A549 (cell line): ENCODE measurements at regions of chr1 and their contacts with region 1.

Region 1: GRCh38 chr1:184664042-184664655 is 90.5 kb downstream of the EDEM3 start:
- DNase-seq: peak; percentile 51 to 56
- ATAC-seq: peak; percentile 90 to 98
- H3K4me3 ChIP-seq: 0 out of 3 replicates have a peak overlapping the region, but pooled peaks have one; percentile 25
- H3K27ac ChIP-seq: peak overlapping the region; percentile 60 to 75
- H3K4me1 ChIP-seq: no peaks in the 10 kb centered on the region
- CTCF ChIP-seq: peak; percentile 86
- EP300 ChIP-seq: no peak
- POLR2A ChIP-seq: no peak
- RAD21 ChIP-seq: peak; percentile 83 to 91

Region 2: DNA sequence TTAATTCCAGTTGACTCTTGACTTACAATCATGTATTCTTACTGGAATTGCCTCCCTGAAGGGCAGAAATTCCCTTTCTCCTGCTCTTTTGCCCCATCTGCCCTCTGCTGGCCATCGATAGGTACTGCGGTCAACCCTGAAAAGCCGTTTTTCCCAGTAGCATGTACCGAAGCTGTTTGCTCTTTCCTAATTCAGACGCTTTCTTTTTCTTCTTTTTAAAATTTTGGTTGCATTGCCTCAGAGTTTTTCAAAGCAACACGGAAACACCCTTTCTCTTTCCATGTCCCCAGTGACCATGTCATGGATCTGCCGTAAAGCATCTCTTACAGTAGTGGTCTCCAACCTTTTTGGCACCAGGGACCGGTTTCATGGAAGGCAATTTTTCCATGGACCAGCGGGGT is 441.5 kb before region 1 on chr1:
- CTCF ChIA-PET with region 1: interaction called, 17 read pairs
- POLR2A ChIA-PET with region 1: no interaction called
- DNase-seq: peak; percentile 35 to 49
- ATAC-seq: peak; percentile 61 to 76; a peak in 4 of 6 replicates
- H3K4me3 ChIP-seq: peak overlapping the region; percentile 46
- H3K27ac ChIP-seq: peak overlapping the region; percentile 10 to 36; a peak in 3 of 6 replicates
- H3K4me1 ChIP-seq: no peaks in the 10 kb centered on the region
- CTCF ChIP-seq: peak; percentile 79
- EP300 ChIP-seq: no peak
- POLR2A ChIP-seq: no peak
- RAD21 ChIP-seq: peak; percentile 72 to 76

Region 3: GRCh38 chr1:184492536-184492935 is 171.6 kb before region 1 on chr1:
- CTCF ChIA-PET with region 1: interaction called, 12 read pairs
- POLR2A ChIA-PET with region 1: no interaction called
- DNase-seq: no peak
- ATAC-seq: no peak
- H3K4me3 ChIP-seq: no peak overlapping the region
- H3K27ac ChIP-seq: peak overlapping the region; percentile 53 to 82; a peak in 4 of 6 replicates
- H3K4me1 ChIP-seq: peaks cover 34% of the 10 kb centered on the region
- CTCF ChIP-seq: no peak
- EP300 ChIP-seq: no peak
- POLR2A ChIP-seq: no peak
- RAD21 ChIP-seq: no peak

Region 4: DNA sequence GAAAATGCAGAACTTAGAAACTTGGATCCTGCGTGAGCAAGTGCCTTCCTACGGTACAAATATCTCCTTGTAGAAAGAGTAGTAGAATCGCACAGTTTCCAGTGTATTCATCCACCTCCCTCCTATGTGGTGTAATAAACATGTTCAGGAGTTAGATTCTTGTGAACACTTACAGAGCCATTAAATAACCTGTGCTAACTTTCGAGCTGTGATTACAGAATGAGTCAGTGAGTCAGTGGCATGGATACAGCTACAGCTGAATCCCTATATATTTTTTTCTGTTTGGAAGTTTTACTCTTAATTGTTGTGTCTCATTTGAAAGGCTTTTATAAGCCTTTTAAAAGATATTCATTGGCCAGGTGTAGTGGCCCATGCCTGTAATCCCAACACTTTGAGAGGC is 58.2 kb before region 1 on chr1:
- CTCF ChIA-PET with region 1: interaction called, 10 read pairs
- POLR2A ChIA-PET with region 1: no interaction called
- DNase-seq: no peak
- ATAC-seq: no peak
- H3K4me3 ChIP-seq: no peak overlapping the region
- H3K27ac ChIP-seq: no peak overlapping the region; a peak in 1 of 6 replicates
- H3K4me1 ChIP-seq: peaks cover 3% of the 10 kb centered on the region; the same call in 1 of the 3 replicates
- CTCF ChIP-seq: no peak
- EP300 ChIP-seq: no peak
- POLR2A ChIP-seq: no peak
- RAD21 ChIP-seq: no peak

Region 5: DNA sequence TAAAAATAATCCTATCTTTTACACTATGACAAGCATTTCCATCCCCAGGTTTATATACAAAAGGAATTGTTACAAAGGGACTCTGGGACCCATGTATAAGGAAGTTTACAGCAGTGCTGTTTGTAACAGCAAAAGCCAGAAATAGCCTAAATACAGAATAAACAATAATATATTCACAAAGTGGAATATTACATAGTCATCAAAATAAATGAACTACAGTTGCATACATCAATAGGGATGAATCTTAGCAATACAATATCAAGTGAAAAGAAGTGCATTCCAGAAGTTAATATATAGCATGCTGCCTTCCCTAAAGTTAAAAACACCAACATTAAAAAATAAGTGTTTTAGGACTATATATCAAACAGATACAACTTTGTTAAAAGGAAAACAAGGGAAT is 13.2 kb after region 1 on chr1:
- CTCF ChIA-PET with region 1: interaction called, 13 read pairs
- POLR2A ChIA-PET with region 1: no interaction called
- DNase-seq: no peak
- ATAC-seq: no peak
- H3K4me3 ChIP-seq: no peak overlapping the region
- H3K27ac ChIP-seq: no peak overlapping the region
- H3K4me1 ChIP-seq: no peaks in the 10 kb centered on the region
- CTCF ChIP-seq: no peak
- EP300 ChIP-seq: no peak
- POLR2A ChIP-seq: no peak
- RAD21 ChIP-seq: no peak

Region 6: GRCh38 chr1:184973272-184974055 is 309.3 kb after region 1 on chr1:
- CTCF ChIA-PET with region 1: no interaction called
- POLR2A ChIA-PET with region 1: no interaction called
- DNase-seq: peak; percentile 29 to 33
- ATAC-seq: peak; percentile 78 to 79
- H3K4me3 ChIP-seq: peak overlapping the region; percentile 70
- H3K27ac ChIP-seq: peak overlapping the region; percentile 73 to 88
- H3K4me1 ChIP-seq: no peaks in the 10 kb centered on the region; the same call in 2 of the 3 replicates
- CTCF ChIP-seq: no peak
- EP300 ChIP-seq: no peak
- POLR2A ChIP-seq: no peak
- RAD21 ChIP-seq: no peak